Dorsolateral prefrontal cortex (tissue), 120 donors: ENCODE measurements at regions of chr1 and their contacts with region 1.

Region 1: GRCh38 chr1:169133801-169134502 is 27.5 kb downstream of the ATP1B1 start:
- DNase-seq: no peak
- H3K4me3 ChIP-seq: no peak overlapping the region
- H3K27ac ChIP-seq: peak overlapping the region in 49 of 59 donors; percentile 1 to 84 (median 60)
- H3K27me3 ChIP-seq: no peaks in the 10 kb centered on the region
- CTCF ChIP-seq: peak in 55 of 56 donors; percentile 15 to 81 (median 57)

Region 2: GRCh38 chr1:168603501-168604110 is 530.3 kb before region 1 on chr1:
- intact Hi-C with region 1: loop called in 1 of 2 experiments (anchors 10 kb)
- DNase-seq: peak; percentile 66 to 89 (median 80)
- H3K4me3 ChIP-seq: no peak overlapping the region
- H3K27ac ChIP-seq: peak overlapping the region in 3 of 59 donors; percentile 2 to 13 (median 9)
- H3K27me3 ChIP-seq: no peaks in the 10 kb centered on the region
- CTCF ChIP-seq: peak; percentile 25 to 93 (median 85)

Region 3: GRCh38 chr1:168979276-168979675 is 154.7 kb before region 1 on chr1:
- intact Hi-C with region 1: no loop called
- DNase-seq: no peak
- H3K4me3 ChIP-seq: no peak overlapping the region
- H3K27ac ChIP-seq: peak overlapping the region in 9 of 59 donors; percentile 1 to 62 (median 32)
- H3K27me3 ChIP-seq: no peaks in the 10 kb centered on the region
- CTCF ChIP-seq: no peak